ENCODE measurements at regions of chr7 and their contacts with region 1.

Region 1: DNA sequence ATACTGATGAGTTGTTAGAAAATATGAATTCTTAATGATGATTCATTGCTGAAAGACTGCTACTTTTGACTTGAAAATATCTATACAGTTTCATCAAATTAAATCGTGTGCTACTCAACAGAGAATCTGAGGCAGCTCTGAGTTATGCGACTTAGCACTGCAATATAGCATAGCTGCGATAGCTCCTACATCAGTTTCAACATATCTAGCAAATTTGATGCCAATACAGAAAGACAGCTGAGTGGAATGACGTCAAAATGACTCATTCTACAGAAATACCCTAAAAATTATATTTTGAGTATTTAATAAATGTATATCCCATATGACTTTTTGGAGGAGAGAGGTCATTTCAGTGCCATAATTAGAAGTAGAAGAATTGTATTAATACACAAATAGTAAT is 1.1 kb upstream of the TARP start:
- DNase-seq: no peak
- H3K4me3 Mint-ChIP-seq: no peak overlapping the region
- H3K27ac Mint-ChIP-seq: no peak overlapping the region
- H3K4me1 Mint-ChIP-seq: no peaks in the 10 kb centered on the region
- H3K27me3 Mint-ChIP-seq: no peaks in the 10 kb centered on the region

Region 2: GRCh38 chr7:38300175-38300574 is 25.7 kb after region 1 on chr7:
- intact Hi-C with region 1: loop called (anchors 2 kb)
- DNase-seq: no peak
- H3K4me3 Mint-ChIP-seq: peak overlapping the region; percentile 79
- H3K27ac Mint-ChIP-seq: peak overlapping the region; percentile 63
- H3K4me1 Mint-ChIP-seq: peaks cover 6% of the 10 kb centered on the region
- H3K27me3 Mint-ChIP-seq: no peaks in the 10 kb centered on the region

Region 3: GRCh38 chr7:38311329-38311937 is 36.9 kb after region 1 on chr7:
- intact Hi-C with region 1: loop called (anchors 5 kb)
- DNase-seq: no peak
- H3K4me3 Mint-ChIP-seq: peak overlapping the region; percentile 73
- H3K27ac Mint-ChIP-seq: peak overlapping the region; percentile 78
- H3K4me1 Mint-ChIP-seq: peaks cover 11% of the 10 kb centered on the region
- H3K27me3 Mint-ChIP-seq: no peaks in the 10 kb centered on the region

Region 4: GRCh38 chr7:38512708-38513107 is 238.2 kb after region 1 on chr7:
- intact Hi-C with region 1: no loop called
- DNase-seq: no peak
- H3K4me3 Mint-ChIP-seq: no peak overlapping the region
- H3K27ac Mint-ChIP-seq: no peak overlapping the region
- H3K4me1 Mint-ChIP-seq: no peaks in the 10 kb centered on the region
- H3K27me3 Mint-ChIP-seq: no peaks in the 10 kb centered on the region

Measured in activated T-helper 1 cell treated with anti-CD3 and anti-CD28 coated beads, Interleukin-12 subunit alpha, Interleukin-12 subunit beta, Interleukin-2, Interleukin-4 antibody, amounts not matched to agents 30 ng/mL and 10 ng/mL and 1 ng/mL, durations not matched to agents 14 hours and 24 hours and 36 hours (primary cell).